B cell (primary cell): ENCODE measurements at regions of chr14 and their contacts with region 1.

Region 1: DNA sequence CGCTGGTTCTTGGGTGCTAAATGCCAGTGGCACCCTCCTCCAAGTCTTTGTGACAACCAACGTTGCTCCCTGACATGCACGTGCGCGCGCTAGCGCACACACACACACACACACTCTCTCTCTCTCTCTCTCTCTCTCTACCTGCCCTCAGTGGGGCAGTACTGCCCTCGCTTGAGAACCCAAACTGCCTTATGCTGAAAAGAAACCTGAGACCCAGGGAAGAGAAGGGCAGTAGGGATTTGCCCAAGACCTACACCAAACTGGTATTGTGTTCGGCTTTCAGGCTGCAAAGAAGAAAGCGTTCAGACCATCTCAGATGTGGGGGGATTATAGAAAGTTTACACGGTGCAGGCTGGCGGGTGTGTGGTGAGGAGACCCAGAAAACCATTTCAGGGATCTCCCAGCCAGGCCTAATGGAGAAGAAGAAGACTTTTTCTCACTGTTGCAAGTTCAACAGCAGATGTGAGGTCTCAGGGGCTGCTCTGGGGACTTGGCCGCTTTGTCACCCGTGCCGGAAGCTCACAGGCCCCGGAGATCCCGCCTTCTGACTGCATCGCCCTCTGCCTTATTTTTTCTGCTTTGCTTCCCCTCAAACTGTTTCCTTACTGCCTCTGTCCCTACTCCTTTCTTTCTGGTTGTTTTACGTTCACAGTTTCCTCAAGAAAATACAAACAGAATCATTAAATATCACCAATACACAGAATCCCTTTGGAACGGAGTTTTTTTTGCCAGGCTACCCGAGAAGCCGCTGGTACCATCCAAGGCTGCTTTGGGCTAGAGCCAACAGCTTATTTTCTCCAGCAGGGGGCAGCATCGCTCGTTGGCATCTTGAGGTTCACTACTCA is 82.4 kb downstream of the PPM1A start:
- DNase-seq: peak; percentile 85
- ATAC-seq: peak; percentile 66
- H3K4me3 ChIP-seq: peak overlapping the region; percentile 49 to 87 (median 73)
- H3K4me3 Mint-ChIP-seq: peak overlapping the region; percentile 90
- H3K27ac ChIP-seq: peak overlapping the region; percentile 63 to 68
- H3K27ac Mint-ChIP-seq: peak overlapping the region; percentile 71
- H3K4me1 ChIP-seq: peaks cover 16 to 20% of the 10 kb centered on the region in 2 donors
- H3K4me1 Mint-ChIP-seq: peaks cover 26% of the 10 kb centered on the region
- H3K27me3 ChIP-seq: peaks cover 0 to 17% (median 4%) of the 10 kb centered on the region in 4 experiments
- H3K27me3 Mint-ChIP-seq: peaks cover 23% of the 10 kb centered on the region
- CTCF ChIP-seq: peak; percentile 98

Region 2: DNA sequence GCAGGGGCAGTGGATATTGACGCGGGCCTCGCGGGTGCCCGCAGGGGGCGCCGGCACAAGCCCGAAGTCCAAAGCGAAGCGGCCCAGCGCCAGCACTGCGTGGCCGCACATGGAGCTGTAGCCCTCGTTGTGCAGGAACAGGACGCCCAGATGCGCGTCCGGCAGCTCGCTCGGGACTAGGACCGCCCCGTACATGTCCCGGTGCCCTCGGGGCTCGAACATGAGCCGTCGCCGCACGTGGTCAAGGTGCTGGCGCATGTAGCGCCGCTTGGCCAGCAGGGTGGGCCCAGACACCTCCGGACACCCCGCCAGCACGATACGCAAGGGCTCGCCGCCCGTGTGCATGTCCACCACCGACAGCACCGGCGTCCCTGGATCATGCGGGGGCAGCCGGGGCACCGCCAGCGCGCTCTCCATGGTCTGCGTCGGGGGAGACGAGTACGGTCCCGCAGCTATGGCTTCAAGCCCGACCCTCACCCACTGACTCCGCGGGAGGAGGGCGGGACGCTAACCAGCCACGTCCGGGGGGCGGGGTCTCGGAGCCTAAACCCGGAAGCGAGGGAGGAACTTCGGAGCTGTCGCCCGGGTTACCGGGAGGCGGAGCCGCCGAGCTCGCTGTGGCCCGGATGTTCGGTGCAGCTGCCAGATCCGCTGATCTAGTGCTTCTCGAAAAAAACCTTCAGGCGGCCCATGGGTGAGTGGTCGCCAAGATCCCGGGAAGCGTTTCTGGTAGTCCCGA is 847.4 kb before region 1 on chr14 and contains the starts of genes JKAMP and L3HYPDH:
- CTCF ChIA-PET with region 1: interaction called, 3 read pairs
- POLR2A ChIA-PET with region 1: no interaction called
- intact Hi-C with region 1: loop called (anchors 10 kb)
- DNase-seq: peak; percentile 96
- ATAC-seq: peak; percentile 92
- H3K4me3 ChIP-seq: peak within 1 kb of the TSS; percentile 83 to 97 (median 93)
- H3K4me3 Mint-ChIP-seq: peak within 1 kb of the TSS; percentile 96
- H3K27ac ChIP-seq: peak within 1 kb of the TSS; percentile 57 to 79
- H3K27ac Mint-ChIP-seq: peak within 1 kb of the TSS; percentile 90
- H3K4me1 ChIP-seq: peaks cover 36 to 40% of the 10 kb centered on the region in 2 donors
- H3K4me1 Mint-ChIP-seq: peaks cover 56% of the 10 kb centered on the region
- H3K27me3 ChIP-seq: no peaks in the 10 kb centered on the region
- H3K27me3 Mint-ChIP-seq: no peaks in the 10 kb centered on the region
- CTCF ChIP-seq: peak; percentile 70
- total RNA-seq, gene JKAMP: 25.7 and 30.3 TPM in 2 replicates
- total RNA-seq, gene L3HYPDH: 67.3 and 74.5 TPM in 2 replicates

Region 3: DNA sequence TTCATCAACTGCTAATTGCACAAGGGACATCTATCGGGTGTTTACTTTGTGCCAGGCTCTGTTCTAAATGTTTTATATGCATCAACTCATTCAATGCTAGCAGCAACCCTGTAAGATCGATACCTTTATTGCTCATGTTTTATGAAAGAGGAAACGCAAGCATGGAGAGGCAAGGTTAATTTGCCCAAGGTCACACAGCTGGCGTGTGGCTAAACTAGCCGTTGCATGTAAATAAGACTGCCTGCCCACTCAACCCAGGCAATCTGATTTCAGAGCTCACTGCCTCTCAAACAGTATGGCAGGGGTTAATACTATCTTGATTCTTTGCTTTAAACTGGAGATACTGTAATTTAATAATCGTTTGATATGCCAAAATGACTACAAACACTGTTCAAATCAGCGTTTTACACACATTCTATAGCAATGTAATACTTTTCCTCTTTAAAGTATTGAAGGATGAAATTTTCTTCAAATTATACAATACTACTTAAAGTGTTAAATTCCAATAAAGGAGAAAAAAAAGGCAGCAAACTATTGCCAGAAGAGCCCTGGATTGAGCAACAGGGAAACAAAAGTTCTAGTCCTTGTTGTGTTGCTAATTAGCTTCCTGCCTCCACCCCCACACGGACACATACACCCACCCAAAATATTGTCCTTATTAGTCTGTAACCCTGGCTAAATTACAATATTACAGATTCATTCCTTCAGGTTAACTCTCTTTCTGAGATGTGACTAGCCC is 127.2 kb before region 1 on chr14:
- CTCF ChIA-PET with region 1: no interaction called
- POLR2A ChIA-PET with region 1: no interaction called
- intact Hi-C with region 1: no loop called
- DNase-seq: peak; percentile 15
- ATAC-seq: no peak
- H3K4me3 ChIP-seq: no peak overlapping the region
- H3K4me3 Mint-ChIP-seq: no peak overlapping the region
- H3K27ac ChIP-seq: no peak overlapping the region
- H3K27ac Mint-ChIP-seq: no peak overlapping the region
- H3K4me1 ChIP-seq: peaks cover 0 to 8% of the 10 kb centered on the region in 2 donors
- H3K4me1 Mint-ChIP-seq: peaks cover 18% of the 10 kb centered on the region
- H3K27me3 ChIP-seq: peaks cover 0 to 6% (median 0%) of the 10 kb centered on the region in 4 experiments
- H3K27me3 Mint-ChIP-seq: peaks cover 24% of the 10 kb centered on the region
- CTCF ChIP-seq: no peak

Region 4: DNA sequence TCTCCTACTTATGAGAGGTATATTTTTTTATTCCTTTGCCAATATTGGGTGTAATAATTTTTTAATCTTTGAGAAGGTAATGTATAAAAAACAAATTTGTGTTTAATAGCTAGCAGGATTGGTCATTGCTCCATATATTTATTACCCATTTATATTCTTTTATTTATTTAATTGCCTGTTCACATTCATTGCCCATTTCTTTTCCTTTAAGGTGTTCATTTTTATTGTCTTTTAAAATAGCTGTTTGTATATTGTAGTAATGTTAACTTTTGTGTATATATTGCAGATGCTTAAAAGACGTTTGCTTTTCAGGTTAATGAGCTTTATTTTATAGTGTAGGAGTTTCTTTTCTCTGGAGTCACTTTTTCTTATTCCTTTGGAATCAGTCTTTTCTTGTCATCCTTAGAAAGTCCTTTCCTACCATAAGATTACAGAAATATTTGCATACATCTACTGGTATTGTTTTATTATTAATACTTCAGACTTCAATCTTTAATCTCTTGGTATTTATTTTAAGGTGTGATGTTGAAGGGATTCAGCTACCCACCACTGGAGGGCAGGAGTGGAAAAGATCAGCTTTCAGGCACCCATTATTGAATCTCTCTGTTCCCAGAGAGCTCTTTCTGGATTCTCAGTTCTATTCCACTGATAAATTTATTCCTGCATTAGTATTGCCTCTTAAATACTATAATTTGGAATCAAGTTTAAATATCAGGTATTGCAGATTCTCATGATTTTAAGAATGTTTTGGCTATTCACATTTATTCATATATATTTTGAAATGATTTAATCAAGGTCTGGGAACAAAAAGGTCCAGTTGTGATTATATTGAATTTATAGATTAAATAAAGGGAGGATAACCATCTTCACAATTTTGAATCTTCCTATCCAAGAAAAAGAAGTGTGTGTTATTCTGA is 65.1 kb before region 1 on chr14:
- CTCF ChIA-PET with region 1: interaction called, 10 read pairs
- POLR2A ChIA-PET with region 1: no interaction called
- intact Hi-C with region 1: loop called (anchors 5 kb)
- DNase-seq: peak; percentile 35
- ATAC-seq: peak; percentile 28
- H3K4me3 ChIP-seq: no peak overlapping the region
- H3K4me3 Mint-ChIP-seq: no peak overlapping the region
- H3K27ac ChIP-seq: no peak overlapping the region
- H3K27ac Mint-ChIP-seq: no peak overlapping the region
- H3K4me1 ChIP-seq: no peaks in the 10 kb centered on the region
- H3K4me1 Mint-ChIP-seq: peaks cover 14% of the 10 kb centered on the region
- H3K27me3 ChIP-seq: no peaks in the 10 kb centered on the region
- H3K27me3 Mint-ChIP-seq: no peaks in the 10 kb centered on the region
- CTCF ChIP-seq: peak; percentile 78

Region 5: GRCh38 chr14:60349663-60350365 is 18.4 kb after region 1 on chr14:
- CTCF ChIA-PET with region 1: interaction called, 37 read pairs
- POLR2A ChIA-PET with region 1: no interaction called
- intact Hi-C with region 1: no loop called
- DNase-seq: peak; percentile 55
- ATAC-seq: peak; percentile 36
- H3K4me3 ChIP-seq: no peak overlapping the region
- H3K4me3 Mint-ChIP-seq: no peak overlapping the region
- H3K27ac ChIP-seq: no peak overlapping the region
- H3K27ac Mint-ChIP-seq: no peak overlapping the region
- H3K4me1 ChIP-seq: no peaks in the 10 kb centered on the region
- H3K4me1 Mint-ChIP-seq: no peaks in the 10 kb centered on the region
- H3K27me3 ChIP-seq: peaks cover 0 to 13% (median 2%) of the 10 kb centered on the region in 4 experiments
- H3K27me3 Mint-ChIP-seq: peaks cover 9% of the 10 kb centered on the region
- CTCF ChIP-seq: peak; percentile 75

Region 6: GRCh38 chr14:60363275-60363674 is 31.9 kb after region 1 on chr14:
- CTCF ChIA-PET with region 1: no interaction called
- POLR2A ChIA-PET with region 1: no interaction called
- intact Hi-C with region 1: no loop called
- DNase-seq: no peak
- ATAC-seq: no peak
- H3K4me3 ChIP-seq: no peak overlapping the region
- H3K4me3 Mint-ChIP-seq: no peak overlapping the region
- H3K27ac ChIP-seq: no peak overlapping the region
- H3K27ac Mint-ChIP-seq: no peak overlapping the region
- H3K4me1 ChIP-seq: no peaks in the 10 kb centered on the region
- H3K4me1 Mint-ChIP-seq: no peaks in the 10 kb centered on the region
- H3K27me3 ChIP-seq: peaks cover 0 to 6% (median 1%) of the 10 kb centered on the region in 4 experiments
- H3K27me3 Mint-ChIP-seq: peaks cover 36% of the 10 kb centered on the region
- CTCF ChIP-seq: no peak

Region 7: DNA sequence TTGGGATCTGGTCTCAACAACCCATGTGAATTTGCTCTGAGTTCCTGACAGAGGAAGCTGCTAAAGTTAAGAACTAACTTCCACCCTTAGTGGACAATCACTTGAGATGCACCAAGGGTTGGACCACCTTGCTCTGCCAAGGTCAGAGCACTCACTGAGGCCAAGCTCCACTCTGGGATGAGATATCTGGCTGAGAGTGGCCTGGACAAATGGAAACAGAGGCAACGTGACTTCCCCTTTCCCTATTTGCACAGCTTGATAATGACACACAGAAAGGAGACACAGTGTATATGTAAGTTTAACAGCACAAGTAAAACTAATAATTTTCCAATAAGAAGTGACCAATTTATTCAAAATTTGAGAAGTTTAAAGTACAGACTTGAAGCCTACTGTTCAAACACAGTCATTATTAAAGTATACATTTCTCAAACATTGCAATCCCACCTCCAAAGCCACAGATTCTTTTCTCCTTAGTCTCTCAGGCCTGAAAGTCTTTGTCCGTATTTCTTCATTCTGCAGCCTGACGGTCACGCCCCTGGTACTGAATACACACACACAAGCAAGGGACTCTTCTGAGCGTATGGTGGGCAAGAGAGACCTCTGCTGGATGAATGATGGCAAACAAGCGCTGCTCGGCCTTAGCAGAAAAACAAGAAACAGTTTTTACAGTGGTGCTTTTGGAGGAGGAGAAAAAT is 921.1 kb after region 1 on chr14:
- CTCF ChIA-PET with region 1: interaction called, 8 read pairs
- POLR2A ChIA-PET with region 1: no interaction called
- intact Hi-C with region 1: loop called (anchors 5 kb)
- DNase-seq: peak; percentile 74
- ATAC-seq: peak; percentile 88
- H3K4me3 ChIP-seq: no peak overlapping the region
- H3K4me3 Mint-ChIP-seq: no peak overlapping the region
- H3K27ac ChIP-seq: no peak overlapping the region
- H3K27ac Mint-ChIP-seq: no peak overlapping the region
- H3K4me1 ChIP-seq: peaks cover 3 to 7% of the 10 kb centered on the region in 2 donors
- H3K4me1 Mint-ChIP-seq: peaks cover 10% of the 10 kb centered on the region
- H3K27me3 ChIP-seq: peaks cover 0 to 5% (median 1%) of the 10 kb centered on the region in 4 experiments
- H3K27me3 Mint-ChIP-seq: peaks cover 22% of the 10 kb centered on the region
- CTCF ChIP-seq: peak; percentile 86